ENCODE measurements at regions of chr17 and their contacts with region 1.

Region 1: DNA sequence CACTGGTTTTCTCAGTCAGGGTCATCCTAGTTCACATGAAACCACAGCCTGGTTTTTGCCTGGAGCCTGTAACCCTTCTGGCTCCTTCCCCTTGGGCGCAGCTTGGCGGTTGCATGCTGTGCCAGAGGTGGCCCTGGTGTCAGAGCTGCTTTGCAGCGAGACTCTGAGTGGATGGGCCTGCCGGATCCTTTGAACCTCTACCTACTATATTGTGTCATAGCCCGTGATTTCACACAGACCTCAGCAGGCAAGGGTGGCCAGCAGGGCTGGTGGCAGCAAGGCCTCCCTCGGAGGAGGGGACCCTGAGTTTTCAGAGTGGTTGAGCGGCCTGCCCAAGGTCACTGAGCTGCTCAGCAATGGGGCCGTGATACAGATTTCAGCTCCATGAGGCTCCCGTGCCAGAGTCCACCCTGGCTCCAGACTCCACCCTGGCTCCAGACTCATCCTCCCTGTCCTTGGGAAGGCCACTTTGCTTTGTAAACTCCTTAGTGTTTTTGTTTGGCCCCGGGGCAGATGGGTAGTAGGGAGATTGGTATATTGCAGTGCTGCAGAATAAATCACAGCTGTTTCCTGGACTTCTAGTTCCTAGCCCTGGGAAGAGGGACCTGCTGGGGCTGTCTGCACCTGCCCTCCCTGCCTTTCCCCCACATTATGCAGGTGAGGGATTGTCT is 9.7 kb downstream of the MPRIP start:
- DNase-seq: peak; percentile 80 to 91
- H3K4me3 ChIP-seq: peak overlapping the region; percentile 9; the same call in 1 of the 2 replicates
- H3K27ac ChIP-seq: peak overlapping the region; percentile 84
- H3K4me1 ChIP-seq: peaks cover 93% of the 10 kb centered on the region
- H3K27me3 ChIP-seq: no peaks in the 10 kb centered on the region
- CTCF ChIP-seq: no peak

Region 2: GRCh38 chr17:16877102-16877501 is 174.8 kb before region 1 on chr17:
- CTCF ChIA-PET with region 1: no interaction called
- POLR2A ChIA-PET with region 1: no interaction called
- intact Hi-C with region 1: no loop called
- DNase-seq: no peak
- H3K4me3 ChIP-seq: no peak overlapping the region
- H3K27ac ChIP-seq: no peak overlapping the region
- H3K4me1 ChIP-seq: no peaks in the 10 kb centered on the region
- H3K27me3 ChIP-seq: no peaks in the 10 kb centered on the region
- CTCF ChIP-seq: no peak

Region 3: GRCh38 chr17:17021194-17021863 is 30.6 kb before region 1 on chr17:
- CTCF ChIA-PET with region 1: interaction called, 4 read pairs
- POLR2A ChIA-PET with region 1: interaction called, 5 read pairs
- intact Hi-C with region 1: loop called (anchors 2 kb)
- DNase-seq: peak; percentile 94 to 95
- H3K4me3 ChIP-seq: peak overlapping the region; percentile 48
- H3K27ac ChIP-seq: peak overlapping the region; percentile 98
- H3K4me1 ChIP-seq: peaks cover 88% of the 10 kb centered on the region
- H3K27me3 ChIP-seq: no peaks in the 10 kb centered on the region
- CTCF ChIP-seq: no peak

Region 4: DNA sequence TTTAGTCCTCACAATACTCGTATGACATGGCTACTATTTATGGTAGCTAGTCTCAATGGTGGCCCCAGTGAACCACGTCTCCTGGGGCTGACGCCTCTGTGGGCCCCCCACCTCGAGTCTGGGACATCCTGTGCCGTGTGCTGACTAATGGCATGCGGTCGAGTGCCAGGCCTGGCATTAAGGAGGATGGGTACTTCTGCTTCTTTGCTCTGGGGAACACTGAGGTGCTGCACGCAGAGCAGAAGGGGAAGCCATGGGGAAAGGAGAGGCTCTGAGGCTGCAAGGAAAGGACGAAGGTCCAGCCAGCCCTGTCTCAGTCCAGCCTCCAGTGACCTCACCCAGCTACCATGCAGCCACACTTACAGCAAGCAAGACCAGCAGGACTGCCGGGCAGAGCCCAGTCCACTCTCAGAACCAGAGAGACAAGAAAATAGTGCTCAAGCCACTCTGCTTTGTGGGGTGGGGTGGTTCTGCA is 15.4 kb before region 1 on chr17:
- CTCF ChIA-PET with region 1: interaction called, 4 read pairs
- POLR2A ChIA-PET with region 1: interaction called, 11 read pairs
- intact Hi-C with region 1: no loop called
- DNase-seq: no peak
- H3K4me3 ChIP-seq: no peak overlapping the region
- H3K27ac ChIP-seq: no peak overlapping the region
- H3K4me1 ChIP-seq: peaks cover 69% of the 10 kb centered on the region
- H3K27me3 ChIP-seq: no peaks in the 10 kb centered on the region
- CTCF ChIP-seq: no peak

Region 5: DNA sequence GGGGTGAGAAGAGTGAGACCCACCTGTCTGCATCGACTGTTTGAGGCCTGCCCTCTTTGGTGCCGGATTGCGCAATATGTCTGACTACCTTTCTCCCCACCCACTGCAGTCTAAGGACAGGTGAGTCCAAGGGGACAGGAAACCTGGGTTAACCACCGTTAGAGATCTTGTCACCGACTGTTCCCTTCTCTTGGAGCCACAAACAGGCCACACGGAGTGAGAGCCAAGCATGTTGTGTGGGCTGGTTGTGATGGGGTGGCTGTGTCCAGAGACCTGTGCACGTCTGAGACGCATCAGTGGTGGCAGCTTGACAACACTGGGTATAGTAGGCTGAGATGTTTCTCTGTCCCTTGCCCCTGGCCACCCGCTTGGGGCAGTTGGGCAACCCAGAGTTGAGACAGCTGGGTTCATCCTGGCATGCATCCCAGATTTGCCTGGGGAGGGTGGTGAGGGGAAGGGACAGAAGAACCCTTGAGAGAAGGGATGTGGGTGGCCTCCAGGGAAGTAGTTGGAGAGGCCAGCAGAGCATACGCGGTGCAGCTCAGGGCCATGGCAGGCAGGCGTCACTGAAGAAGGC is 11.7 kb after region 1 on chr17:
- CTCF ChIA-PET with region 1: no interaction called
- POLR2A ChIA-PET with region 1: interaction called, 15 read pairs
- intact Hi-C with region 1: no loop called
- DNase-seq: peak; percentile 56 to 84
- H3K4me3 ChIP-seq: no peak overlapping the region
- H3K27ac ChIP-seq: peak overlapping the region; percentile 35
- H3K4me1 ChIP-seq: peaks cover 76% of the 10 kb centered on the region
- H3K27me3 ChIP-seq: no peaks in the 10 kb centered on the region
- CTCF ChIP-seq: no peak

Region 6: DNA sequence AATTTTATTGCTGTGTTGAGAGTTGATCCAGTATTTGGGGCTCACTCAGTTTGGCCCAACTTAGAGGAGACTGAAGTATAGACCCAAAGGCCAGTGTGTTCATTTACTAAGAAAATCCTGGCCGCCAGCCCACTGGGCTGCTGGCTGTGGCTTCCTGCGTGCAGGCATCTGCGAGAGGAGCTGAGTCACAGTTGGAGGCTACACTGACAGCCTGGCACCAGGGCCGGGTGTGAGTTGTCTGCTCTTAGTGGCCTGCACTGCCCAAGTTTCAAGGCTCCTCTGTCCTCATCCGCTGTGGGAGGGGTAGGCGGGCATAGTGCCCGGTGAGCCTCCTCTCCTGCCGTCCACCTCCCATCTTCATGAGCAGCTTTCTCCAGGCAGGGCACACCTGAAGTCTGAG is 100.0 kb after region 1 on chr17:
- CTCF ChIA-PET with region 1: no interaction called
- POLR2A ChIA-PET with region 1: no interaction called
- intact Hi-C with region 1: loop called (anchors 5 kb)
- DNase-seq: peak in 1 of 2 experiments; percentile 83
- H3K4me3 ChIP-seq: no peak overlapping the region
- H3K27ac ChIP-seq: peak overlapping the region; percentile 28; the same call in 1 of the 2 replicates
- H3K4me1 ChIP-seq: no peaks in the 10 kb centered on the region
- H3K27me3 ChIP-seq: no peaks in the 10 kb centered on the region
- CTCF ChIP-seq: no peak